Activated T-helper 1 cell treated with anti-CD3 and anti-CD28 coated beads, Interleukin-12 subunit alpha, Interleukin-12 subunit beta, Interleukin-2, Interleukin-4 antibody, amounts not matched to agents 30 ng/mL and 10 ng/mL and 1 ng/mL, durations not matched to agents 14 hours and 24 hours and 36 hours (primary cell): ENCODE measurements at regions of chr18 and their contacts with region 1.

Region 1: GRCh38 chr18:63949068-63949737 is at the start of gene HMSD:
- DNase-seq: peak; percentile 68
- H3K4me3 Mint-ChIP-seq: peak within 1 kb of the TSS; percentile 88
- H3K27ac Mint-ChIP-seq: peak within 1 kb of the TSS; percentile 87
- H3K4me1 Mint-ChIP-seq: peaks cover 46% of the 10 kb centered on the region
- H3K27me3 Mint-ChIP-seq: peaks cover 5% of the 10 kb centered on the region
- total RNA-seq, gene HMSD: 19.7 and 27.8 TPM in 2 replicates

Region 2: DNA sequence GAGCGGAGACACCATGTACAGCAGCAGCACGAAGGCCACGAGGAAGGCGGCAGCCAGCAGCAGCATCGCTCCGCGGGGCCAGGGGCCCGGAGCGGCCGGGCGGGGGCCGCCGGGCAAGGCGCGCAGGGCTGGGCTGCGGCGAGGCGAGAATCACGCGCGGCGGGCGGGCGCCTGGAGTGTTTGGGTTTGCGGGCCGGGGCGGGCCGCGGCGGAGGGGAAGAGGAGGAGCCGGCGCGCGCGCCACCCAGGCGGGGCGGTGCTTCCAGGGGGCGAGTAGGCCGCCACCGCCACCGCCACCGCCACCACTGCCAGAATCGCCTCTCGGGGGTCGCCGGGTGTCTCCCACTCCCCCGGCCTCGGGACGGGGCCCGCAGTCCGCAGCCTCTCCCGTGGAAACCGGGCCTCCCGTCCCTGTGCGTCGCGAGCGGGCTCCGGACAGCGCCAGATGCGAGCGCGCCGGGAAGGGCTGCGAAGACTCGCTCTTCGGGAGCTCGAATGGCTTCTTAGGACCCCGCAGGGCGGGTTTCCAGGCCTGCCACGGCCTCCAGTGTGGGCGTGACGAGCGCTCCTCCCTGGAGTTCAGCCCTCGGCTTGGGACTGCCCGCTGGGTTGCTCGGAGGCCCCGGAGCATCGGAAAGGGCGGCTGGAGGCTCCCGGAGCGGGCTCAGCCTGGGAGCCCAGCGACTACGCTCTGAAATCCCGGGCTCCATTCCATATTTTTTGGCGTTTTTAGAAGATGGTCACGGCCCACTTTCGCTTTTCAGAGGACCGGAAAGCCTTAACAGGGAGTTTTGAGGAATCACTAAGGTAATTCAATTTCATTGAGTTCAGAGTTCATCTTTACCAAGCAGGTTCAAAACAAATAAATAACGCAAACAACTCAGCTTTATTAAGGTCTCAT is 581.9 kb before region 1 on chr18 and contains the start of gene KDSR:
- intact Hi-C with region 1: loop called (anchors 10 kb)
- DNase-seq: peak; percentile 82
- H3K4me3 Mint-ChIP-seq: peak within 1 kb of the TSS; percentile 93
- H3K27ac Mint-ChIP-seq: peak within 1 kb of the TSS; percentile 83
- H3K4me1 Mint-ChIP-seq: peaks cover 44% of the 10 kb centered on the region
- H3K27me3 Mint-ChIP-seq: no peaks in the 10 kb centered on the region
- total RNA-seq, gene KDSR: 72.2 and 83.5 TPM in 2 replicates

Region 3: DNA sequence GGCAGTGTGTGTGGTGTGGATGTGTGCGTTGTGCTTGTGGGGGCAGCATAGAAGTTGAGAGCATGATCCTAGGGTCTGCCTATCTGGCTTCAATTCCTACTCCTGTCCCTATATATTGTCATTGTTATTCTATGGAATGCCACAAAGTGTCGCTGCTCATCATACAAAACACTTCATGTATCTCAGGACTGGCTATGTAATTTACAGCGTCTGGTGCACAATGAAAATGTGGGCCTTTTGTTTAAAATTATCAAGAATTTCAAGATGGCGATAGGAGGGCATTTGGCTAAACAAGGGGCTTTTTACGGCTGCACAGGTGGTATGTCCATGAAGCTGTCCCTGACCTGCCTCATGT is 58.3 kb before region 1 on chr18:
- intact Hi-C with region 1: loop called (anchors 2 kb)
- DNase-seq: no peak
- H3K4me3 Mint-ChIP-seq: no peak overlapping the region
- H3K27ac Mint-ChIP-seq: no peak overlapping the region
- H3K4me1 Mint-ChIP-seq: no peaks in the 10 kb centered on the region
- H3K27me3 Mint-ChIP-seq: no peaks in the 10 kb centered on the region

Region 4: GRCh38 chr18:63963615-63964256 is 14.5 kb after region 1 on chr18:
- intact Hi-C with region 1: loop called (anchors 1 kb)
- DNase-seq: peak; percentile 13
- H3K4me3 Mint-ChIP-seq: no peak overlapping the region
- H3K27ac Mint-ChIP-seq: no peak overlapping the region
- H3K4me1 Mint-ChIP-seq: peaks cover 21% of the 10 kb centered on the region
- H3K27me3 Mint-ChIP-seq: no peaks in the 10 kb centered on the region

Region 5: GRCh38 chr18:63979409-63979920 is 30.3 kb after region 1 on chr18:
- intact Hi-C with region 1: loop called (anchors 1 kb)
- DNase-seq: peak; percentile 19
- H3K4me3 Mint-ChIP-seq: no peak overlapping the region
- H3K27ac Mint-ChIP-seq: peak overlapping the region; percentile 20
- H3K4me1 Mint-ChIP-seq: peaks cover 40% of the 10 kb centered on the region
- H3K27me3 Mint-ChIP-seq: no peaks in the 10 kb centered on the region